ENCODE measurements at regions of chr1 and their contacts with region 1.

Region 1: DNA sequence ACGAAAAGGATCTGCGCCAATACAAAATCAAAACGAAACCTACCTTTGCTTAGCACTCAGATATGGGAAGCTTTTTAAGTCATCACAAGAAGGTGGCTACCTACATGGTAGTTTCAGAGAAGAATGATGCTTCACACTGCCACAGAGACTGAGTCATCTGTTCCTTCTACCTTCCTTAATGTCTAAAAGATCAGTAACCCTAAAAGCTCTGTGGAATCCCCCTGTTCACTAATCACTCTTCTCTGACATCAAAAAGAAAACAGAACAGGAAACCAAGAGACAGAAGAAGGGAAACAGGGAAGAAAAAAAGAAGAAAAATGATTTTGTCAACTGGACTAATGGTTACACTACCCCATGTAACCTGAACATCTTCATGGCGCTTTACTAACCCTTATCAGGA is 177.2 kb downstream of the SMYD3 start:
- DNase-seq: peak; percentile 65
- H3K4me3 Mint-ChIP-seq: no peak overlapping the region
- H3K27ac Mint-ChIP-seq: peak overlapping the region; percentile 67
- H3K4me1 Mint-ChIP-seq: peaks cover 54% of the 10 kb centered on the region
- H3K27me3 Mint-ChIP-seq: no peaks in the 10 kb centered on the region

Region 2: DNA sequence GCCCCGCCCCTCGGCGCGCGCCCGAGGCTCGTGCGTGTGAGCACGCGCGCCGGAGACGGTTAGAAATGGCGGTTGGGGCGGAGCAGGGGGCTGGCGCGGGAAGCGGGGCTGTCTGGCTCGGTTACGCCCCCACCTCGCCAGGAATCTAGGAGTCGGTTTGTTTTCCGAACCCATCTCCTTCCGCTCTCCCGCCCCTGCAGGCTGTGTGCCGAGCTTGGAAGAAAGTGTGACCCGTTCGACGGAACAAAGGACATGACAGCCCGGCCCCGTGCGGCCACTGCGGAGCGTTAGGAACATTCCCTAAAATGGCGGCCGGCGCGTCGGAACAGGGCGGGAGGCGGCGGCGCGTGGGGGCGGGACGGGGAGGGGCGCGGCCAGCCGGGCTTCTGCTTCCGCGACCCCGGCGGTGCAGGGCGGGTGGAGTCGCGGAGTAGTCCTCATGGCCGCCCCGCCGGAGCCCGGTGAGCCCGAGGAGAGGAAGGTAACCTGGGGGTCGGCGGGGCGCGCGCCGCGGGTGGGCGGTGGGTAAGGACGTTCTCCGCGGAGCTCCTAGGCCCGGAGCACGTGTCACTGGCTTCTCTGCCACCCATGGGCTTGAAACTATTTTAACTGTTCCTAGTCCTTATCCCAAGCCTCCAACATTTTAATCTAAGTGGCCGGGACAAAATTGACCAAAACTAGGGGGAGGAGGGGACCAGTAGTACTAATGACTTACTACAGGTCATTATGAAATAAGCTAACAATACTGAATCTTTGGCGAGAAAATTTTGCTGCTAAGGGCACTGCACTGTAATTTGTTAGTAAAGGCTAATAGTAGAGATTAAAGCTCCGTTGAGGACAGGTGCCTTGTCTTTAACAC is 1494.4 kb before region 1 on chr1 and contains the start of gene COX20:
- CTCF ChIA-PET with region 1: no interaction called
- intact Hi-C with region 1: loop called (anchors 5 kb)
- DNase-seq: peak; percentile 85
- H3K4me3 Mint-ChIP-seq: peak within 1 kb of the TSS; percentile 94
- H3K27ac Mint-ChIP-seq: peak within 1 kb of the TSS; percentile 99
- H3K4me1 Mint-ChIP-seq: peaks cover 38% of the 10 kb centered on the region
- H3K27me3 Mint-ChIP-seq: no peaks in the 10 kb centered on the region
- total RNA-seq, gene COX20: 21.4 to 24.2 TPM

Region 3: GRCh38 chr1:245383396-245384330 is 946.2 kb before region 1 on chr1:
- CTCF ChIA-PET with region 1: no interaction called
- intact Hi-C with region 1: no loop called
- DNase-seq: no peak
- H3K4me3 Mint-ChIP-seq: no peak overlapping the region
- H3K27ac Mint-ChIP-seq: no peak overlapping the region
- H3K4me1 Mint-ChIP-seq: peaks cover 2% of the 10 kb centered on the region
- H3K27me3 Mint-ChIP-seq: peaks cover 2% of the 10 kb centered on the region

Region 4: GRCh38 chr1:246020211-246020954 is 309.5 kb before region 1 on chr1:
- CTCF ChIA-PET with region 1: no interaction called
- intact Hi-C with region 1: loop called (anchors 2 kb)
- DNase-seq: no peak
- H3K4me3 Mint-ChIP-seq: no peak overlapping the region
- H3K27ac Mint-ChIP-seq: no peak overlapping the region
- H3K4me1 Mint-ChIP-seq: peaks cover 9% of the 10 kb centered on the region
- H3K27me3 Mint-ChIP-seq: no peaks in the 10 kb centered on the region

Region 5: GRCh38 chr1:246139745-246140182 is 190.1 kb before region 1 on chr1:
- CTCF ChIA-PET with region 1: no interaction called
- intact Hi-C with region 1: loop called (anchors 1 kb)
- DNase-seq: no peak
- H3K4me3 Mint-ChIP-seq: no peak overlapping the region
- H3K27ac Mint-ChIP-seq: no peak overlapping the region
- H3K4me1 Mint-ChIP-seq: peaks cover 8% of the 10 kb centered on the region
- H3K27me3 Mint-ChIP-seq: no peaks in the 10 kb centered on the region

Region 6: DNA sequence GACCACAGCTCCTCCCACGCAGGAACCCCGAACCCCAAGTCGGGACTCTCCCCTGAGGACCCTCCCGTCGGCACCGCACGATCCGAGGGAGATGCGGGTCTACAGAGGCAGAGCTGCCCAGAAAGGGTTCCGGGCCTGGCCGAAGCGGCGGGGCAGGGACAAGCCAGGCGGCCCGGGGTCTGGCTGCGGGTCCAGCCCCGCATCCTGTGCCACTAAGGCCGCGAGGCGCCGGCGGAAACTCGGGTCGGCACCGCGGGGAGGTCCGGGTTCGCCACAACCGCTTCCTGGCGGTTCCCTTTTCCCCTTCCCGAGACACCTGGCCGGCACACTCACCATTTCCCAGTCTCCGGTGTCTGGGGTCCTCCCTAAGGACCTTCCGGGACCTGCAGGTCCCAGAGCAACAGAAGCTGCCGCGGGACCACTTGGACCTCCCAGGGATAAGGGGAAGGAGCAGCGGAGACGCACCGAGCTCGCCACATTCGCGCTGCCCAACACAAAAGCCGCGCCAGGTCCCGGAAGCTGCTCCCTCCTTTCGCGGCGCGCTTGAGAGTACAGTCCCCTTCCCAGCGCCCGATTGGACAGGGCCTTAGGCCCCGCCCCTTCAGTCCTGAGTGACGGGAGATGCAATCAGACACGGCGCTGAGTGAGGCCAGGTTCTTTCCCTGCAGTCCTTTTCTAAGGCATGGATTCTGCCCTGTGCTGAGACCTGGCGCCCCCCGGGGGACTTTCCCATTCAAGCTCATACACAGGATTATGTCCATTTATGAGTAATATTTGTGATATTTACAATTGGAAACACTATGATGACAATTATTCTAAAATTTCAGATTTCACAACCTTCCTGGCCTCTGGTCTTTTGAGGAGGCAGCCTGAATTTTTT is 748.6 kb after region 1 on chr1 and contains the start of gene ZNF670:
- CTCF ChIA-PET with region 1: no interaction called
- intact Hi-C with region 1: loop called (anchors 1 kb)
- DNase-seq: peak; percentile 98
- H3K4me3 Mint-ChIP-seq: peak within 1 kb of the TSS; percentile 91
- H3K27ac Mint-ChIP-seq: peak within 1 kb of the TSS; percentile 90
- H3K4me1 Mint-ChIP-seq: peaks cover 22% of the 10 kb centered on the region
- H3K27me3 Mint-ChIP-seq: peaks cover 6% of the 10 kb centered on the region
- total RNA-seq, gene ZNF670: 4.1 to 4.3 TPM

Region 7: DNA sequence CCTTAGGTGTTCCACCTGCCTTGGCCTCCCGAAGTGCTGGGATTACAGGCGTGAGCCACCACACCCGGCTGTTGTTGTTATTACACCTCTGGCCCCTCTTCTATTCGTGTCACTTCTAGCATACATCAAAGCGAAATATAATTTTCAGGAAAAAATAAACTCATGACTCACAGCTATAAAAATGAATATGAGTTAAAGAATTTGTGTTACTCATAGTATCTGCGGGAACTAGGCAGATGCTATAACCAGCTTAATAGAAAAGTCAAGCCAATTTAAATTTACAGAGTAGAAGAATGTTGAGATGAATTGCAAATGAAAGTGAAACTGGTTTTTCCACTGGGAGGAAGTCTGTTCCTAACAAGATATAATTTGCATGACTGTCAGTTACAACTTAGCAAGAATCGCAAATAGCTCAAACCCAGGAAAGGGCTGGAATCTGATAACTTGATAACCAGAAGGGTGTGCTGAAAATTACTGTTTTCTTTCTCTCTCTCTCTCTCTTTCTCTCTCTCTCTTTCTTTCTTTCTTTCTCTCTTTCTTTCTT is 1576.7 kb after region 1 on chr1:
- CTCF ChIA-PET with region 1: no interaction called
- intact Hi-C with region 1: loop called (anchors 5 kb)
- DNase-seq: peak; percentile 60
- H3K4me3 Mint-ChIP-seq: peak overlapping the region; percentile 24
- H3K27ac Mint-ChIP-seq: peak overlapping the region; percentile 76
- H3K4me1 Mint-ChIP-seq: peaks cover 31% of the 10 kb centered on the region
- H3K27me3 Mint-ChIP-seq: peaks cover 3% of the 10 kb centered on the region

Measured in activated naive CD4-positive, alpha-beta T cell treated with anti-CD3 and anti-CD28 coated beads for 36 hours (primary cell).